Breast epithelium (tissue), 4 donors: ENCODE measurements at regions of chr12 and their contacts with region 1.

Region 1: DNA sequence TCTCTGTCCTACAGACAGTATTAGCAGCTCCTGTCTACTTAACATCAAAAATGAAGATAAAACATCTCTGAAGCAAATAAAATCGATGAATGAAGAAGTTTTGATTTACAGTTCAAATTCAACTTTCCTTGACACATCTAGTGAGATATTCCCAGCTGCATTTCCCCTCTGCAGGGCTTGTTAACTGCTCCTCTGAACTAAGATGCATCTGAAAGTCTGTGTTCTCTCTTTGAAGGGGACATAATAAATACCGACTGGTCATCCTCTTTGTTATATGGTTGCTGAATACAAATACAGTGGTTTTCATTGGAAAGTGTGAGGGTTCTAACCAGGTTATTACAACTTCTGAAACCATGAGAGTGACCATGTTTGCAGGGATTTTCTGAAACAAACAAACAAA is 266.4 kb upstream of the SLC16A7 start:
- DNase-seq: no peak
- H3K4me3 ChIP-seq: no peak overlapping the region
- H3K27ac ChIP-seq: no peak overlapping the region
- H3K4me1 ChIP-seq: no peaks in the 10 kb centered on the region
- H3K27me3 ChIP-seq: no peaks in the 10 kb centered on the region
- CTCF ChIP-seq: no peak
- POLR2A ChIP-seq: no peak

Region 2: DNA sequence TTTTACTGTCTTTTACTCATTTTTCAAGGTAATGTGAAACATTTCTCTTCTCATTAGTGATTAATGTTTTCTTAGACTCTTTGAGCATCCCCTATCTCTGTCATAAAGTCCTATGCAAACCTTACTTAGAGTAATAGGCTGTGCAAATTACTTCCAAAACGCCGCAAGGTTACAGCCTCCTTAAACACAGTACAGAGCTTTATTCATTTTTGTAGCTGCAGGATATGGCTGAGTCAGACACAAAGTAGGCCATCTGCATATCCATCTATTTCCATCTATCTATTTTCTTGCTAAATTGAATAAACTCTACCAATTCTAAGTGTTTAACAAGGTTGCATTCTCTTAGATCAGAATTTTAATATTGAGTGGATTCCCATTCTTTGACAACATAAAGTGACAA is 69.3 kb before region 1 on chr12:
- intact Hi-C with region 1: no loop called
- DNase-seq: no peak
- H3K4me3 ChIP-seq: no peak overlapping the region
- H3K27ac ChIP-seq: no peak overlapping the region
- H3K4me1 ChIP-seq: no peaks in the 10 kb centered on the region
- H3K27me3 ChIP-seq: no peaks in the 10 kb centered on the region
- CTCF ChIP-seq: no peak
- POLR2A ChIP-seq: no peak

Region 3: GRCh38 chr12:59283012-59283411 is 46.4 kb before region 1 on chr12:
- intact Hi-C with region 1: no loop called
- DNase-seq: no peak
- H3K4me3 ChIP-seq: no peak overlapping the region
- H3K27ac ChIP-seq: no peak overlapping the region
- H3K4me1 ChIP-seq: no peaks in the 10 kb centered on the region
- H3K27me3 ChIP-seq: no peaks in the 10 kb centered on the region
- CTCF ChIP-seq: no peak
- POLR2A ChIP-seq: no peak

Region 4: GRCh38 chr12:59294221-59294620 is 35.2 kb before region 1 on chr12:
- intact Hi-C with region 1: loop called (anchors 2 kb)
- DNase-seq: no peak
- H3K4me3 ChIP-seq: no peak overlapping the region
- H3K27ac ChIP-seq: no peak overlapping the region
- H3K4me1 ChIP-seq: no peaks in the 10 kb centered on the region
- H3K27me3 ChIP-seq: no peaks in the 10 kb centered on the region
- CTCF ChIP-seq: no peak
- POLR2A ChIP-seq: no peak

Region 5: GRCh38 chr12:59383056-59383822 is 53.8 kb after region 1 on chr12:
- intact Hi-C with region 1: no loop called
- DNase-seq: no peak
- H3K4me3 ChIP-seq: peak overlapping the region in 1 of 3 donors; percentile 10
- H3K27ac ChIP-seq: no peak overlapping the region
- H3K4me1 ChIP-seq: no peaks in the 10 kb centered on the region
- H3K27me3 ChIP-seq: no peaks in the 10 kb centered on the region
- CTCF ChIP-seq: no peak
- POLR2A ChIP-seq: no peak

Region 6: DNA sequence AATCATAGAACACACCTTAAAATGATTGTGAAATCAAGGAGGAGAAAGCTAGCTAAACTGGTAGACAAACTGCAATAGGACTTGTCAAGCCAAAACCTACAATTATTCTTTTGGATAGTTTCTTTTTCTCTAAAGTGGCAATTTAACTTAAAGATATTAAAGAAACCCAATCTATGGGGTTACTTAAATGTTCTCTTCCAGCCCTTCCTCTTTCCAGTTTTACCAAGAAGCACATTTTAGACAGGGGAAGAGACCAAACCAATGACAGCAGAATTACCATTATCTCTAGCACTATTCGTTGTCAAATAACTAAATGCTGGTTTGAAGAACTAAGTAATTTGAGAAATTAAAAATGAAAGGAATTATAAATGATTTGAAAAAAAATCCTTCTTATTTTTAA is 265.6 kb after region 1 on chr12:
- intact Hi-C with region 1: no loop called
- DNase-seq: no peak
- H3K4me3 ChIP-seq: peak overlapping the region; percentile 71 to 83 (median 78)
- H3K27ac ChIP-seq: peak overlapping the region; percentile 92 to 98
- H3K4me1 ChIP-seq: no peaks in the 10 kb centered on the region
- H3K27me3 ChIP-seq: no peaks in the 10 kb centered on the region
- CTCF ChIP-seq: no peak
- POLR2A ChIP-seq: no peak